ENCODE measurements at regions of chr10 and their contacts with region 1.

Region 1: GRCh38 chr10:117167789-117168674 is 29.3 kb upstream of the KCNK18 start:
- DNase-seq: no peak
- H3K4me3 ChIP-seq: no peak overlapping the region
- H3K27ac ChIP-seq: no peak overlapping the region
- H3K27me3 ChIP-seq: peaks cover 86% of the 10 kb centered on the region
- CTCF ChIP-seq: peak; percentile 62

Region 2: DNA sequence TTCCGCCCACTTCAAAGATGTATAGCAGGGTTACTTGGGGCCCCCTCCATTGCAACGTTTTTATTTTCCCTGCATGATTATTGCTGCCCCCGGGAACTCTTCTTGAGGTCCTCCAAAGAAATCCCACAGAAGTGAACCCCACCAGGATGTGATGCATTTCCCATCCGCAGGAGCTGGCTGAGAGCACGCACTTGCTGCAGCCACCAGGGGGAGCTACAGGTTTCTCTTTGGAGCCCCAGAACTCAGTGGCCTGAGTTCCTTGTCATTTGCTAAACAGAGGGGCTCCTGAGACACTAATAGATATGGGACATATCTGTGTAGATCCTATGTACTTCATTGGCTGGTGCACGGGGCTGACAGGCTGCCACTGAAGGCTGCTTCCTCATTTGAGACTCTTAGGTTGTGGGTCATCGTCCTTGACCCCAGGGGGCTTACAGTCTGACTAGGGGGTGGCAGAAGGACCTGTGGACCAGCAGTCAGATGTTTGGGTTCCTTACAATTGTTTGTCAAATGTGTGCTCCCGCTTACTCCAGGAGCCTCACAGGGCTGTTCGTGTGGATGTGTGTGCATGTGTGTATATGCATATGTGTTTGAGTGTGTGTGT is 371.0 kb before region 1 on chr10:
- CTCF ChIA-PET with region 1: interaction called, 106 read pairs
- POLR2A ChIA-PET with region 1: no interaction called
- DNase-seq: peak; percentile 30
- H3K4me3 ChIP-seq: no peak overlapping the region
- H3K27ac ChIP-seq: no peak overlapping the region
- H3K27me3 ChIP-seq: peaks cover 19% of the 10 kb centered on the region
- CTCF ChIP-seq: peak; percentile 97

Region 3: DNA sequence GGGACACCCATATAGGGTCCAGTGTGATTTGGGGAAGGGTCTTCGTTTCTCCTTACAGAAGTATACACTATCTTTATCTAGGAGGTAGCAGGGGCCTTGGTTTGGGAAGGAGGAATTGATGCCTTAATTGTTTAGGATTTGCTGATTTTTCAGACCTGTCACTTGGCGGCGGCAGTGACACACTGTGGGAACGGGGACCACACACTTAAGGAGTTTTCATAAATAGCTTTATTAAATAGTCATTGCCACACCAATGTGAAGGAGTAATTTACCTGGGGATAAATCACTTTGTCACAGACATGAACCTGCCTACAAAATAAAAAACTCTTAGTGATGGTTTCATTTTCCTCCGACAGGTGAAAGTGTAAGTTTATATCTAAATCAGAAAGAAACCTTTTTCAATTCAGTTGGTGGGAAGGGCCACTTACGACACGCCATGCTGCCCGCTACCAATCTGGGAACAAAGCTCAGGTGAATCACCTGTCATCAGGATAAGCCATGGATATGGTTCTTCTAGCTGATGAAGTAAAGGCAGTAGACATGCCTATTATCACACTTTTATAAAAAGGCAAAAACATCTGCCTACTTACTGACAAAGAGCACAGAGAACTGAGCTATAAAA is 331.0 kb before region 1 on chr10:
- CTCF ChIA-PET with region 1: interaction called, 33 read pairs
- POLR2A ChIA-PET with region 1: no interaction called
- DNase-seq: no peak
- H3K4me3 ChIP-seq: no peak overlapping the region
- H3K27ac ChIP-seq: no peak overlapping the region
- H3K27me3 ChIP-seq: peaks cover 24% of the 10 kb centered on the region
- CTCF ChIP-seq: peak; percentile 38

Region 4: GRCh38 chr10:117139581-117140524 is 28.2 kb before region 1 on chr10:
- CTCF ChIA-PET with region 1: interaction called, 11 read pairs
- POLR2A ChIA-PET with region 1: no interaction called
- DNase-seq: no peak
- H3K4me3 ChIP-seq: no peak overlapping the region
- H3K27ac ChIP-seq: no peak overlapping the region
- H3K27me3 ChIP-seq: peaks cover 69% of the 10 kb centered on the region
- CTCF ChIP-seq: no peak

Measured in AG04450 (cell line).